HepG2 (cell line): ENCODE measurements at regions of chr3 and their contacts with region 1.

Region 1: GRCh38 chr3:71710906-71711494 is 14.2 kb downstream of the EIF4E3 start:
- DNase-seq: peak; percentile 29
- ATAC-seq: peak; percentile 80
- H3K4me3 ChIP-seq: no peak overlapping the region
- H3K27ac ChIP-seq: no peak overlapping the region
- H3K4me1 ChIP-seq: peaks cover 8% of the 10 kb centered on the region; the same call in 1 of the 2 replicates
- H3K27me3 ChIP-seq: peaks cover 0 to 7% of the 10 kb centered on the region in 2 experiments; a peak in 2 of 5 replicates
- CTCF ChIP-seq: peak; percentile 73
- EP300 ChIP-seq: no peak
- POLR2A ChIP-seq: no peak
- RAD21 ChIP-seq: no peak

Region 2: GRCh38 chr3:71859123-71859519 is 148.1 kb after region 1 on chr3:
- CTCF ChIA-PET with region 1: no interaction called
- POLR2A ChIA-PET with region 1: no interaction called
- in situ Hi-C with region 1: no loop called
- intact Hi-C with region 1: loop called (anchors 2 kb)
- DNase-seq: peak; percentile 16
- ATAC-seq: peak; percentile 61; the same call in 1 of the 3 replicates
- H3K4me3 ChIP-seq: no peak overlapping the region
- H3K27ac ChIP-seq: no peak overlapping the region
- H3K4me1 ChIP-seq: no peaks in the 10 kb centered on the region
- H3K27me3 ChIP-seq: peaks cover 2 to 10% of the 10 kb centered on the region in 2 experiments; a peak in 3 of 5 replicates
- CTCF ChIP-seq: peak; percentile 48
- EP300 ChIP-seq: no peak
- POLR2A ChIP-seq: no peak
- RAD21 ChIP-seq: no peak

Region 3: GRCh38 chr3:73086071-73086494 is 1375.1 kb after region 1 on chr3:
- CTCF ChIA-PET with region 1: interaction called, 3 read pairs
- POLR2A ChIA-PET with region 1: no interaction called
- in situ Hi-C with region 1: loop called (anchors 25 kb)
- intact Hi-C with region 1: no loop called
- DNase-seq: peak; percentile 34
- ATAC-seq: peak; percentile 68
- H3K4me3 ChIP-seq: no peak overlapping the region
- H3K27ac ChIP-seq: no peak overlapping the region
- H3K4me1 ChIP-seq: no peaks in the 10 kb centered on the region
- H3K27me3 ChIP-seq: no peaks in the 10 kb centered on the region; a peak in 1 of 5 replicates
- CTCF ChIP-seq: peak; percentile 81
- EP300 ChIP-seq: no peak
- POLR2A ChIP-seq: no peak
- RAD21 ChIP-seq: peak; percentile 81